ENCODE measurements at regions of chr1 and their contacts with region 1.

Region 1: GRCh38 chr1:33111970-33112369 is 31.0 kb downstream of the AZIN2 start:
- DNase-seq: peak in 3 of 14 experiments; percentile 28 to 54 (median 54)
- ATAC-seq: peak; percentile 58
- H3K4me3 ChIP-seq: no peak overlapping the region
- H3K4me3 Mint-ChIP-seq: no peak overlapping the region
- H3K27ac ChIP-seq: no peak overlapping the region
- H3K27ac Mint-ChIP-seq: no peak overlapping the region
- H3K4me1 ChIP-seq: no peaks in the 10 kb centered on the region
- H3K4me1 Mint-ChIP-seq: no peaks in the 10 kb centered on the region
- H3K27me3 ChIP-seq: no peaks in the 10 kb centered on the region
- H3K27me3 Mint-ChIP-seq: no peaks in the 10 kb centered on the region
- CTCF ChIP-seq: peak; percentile 28

Region 2: DNA sequence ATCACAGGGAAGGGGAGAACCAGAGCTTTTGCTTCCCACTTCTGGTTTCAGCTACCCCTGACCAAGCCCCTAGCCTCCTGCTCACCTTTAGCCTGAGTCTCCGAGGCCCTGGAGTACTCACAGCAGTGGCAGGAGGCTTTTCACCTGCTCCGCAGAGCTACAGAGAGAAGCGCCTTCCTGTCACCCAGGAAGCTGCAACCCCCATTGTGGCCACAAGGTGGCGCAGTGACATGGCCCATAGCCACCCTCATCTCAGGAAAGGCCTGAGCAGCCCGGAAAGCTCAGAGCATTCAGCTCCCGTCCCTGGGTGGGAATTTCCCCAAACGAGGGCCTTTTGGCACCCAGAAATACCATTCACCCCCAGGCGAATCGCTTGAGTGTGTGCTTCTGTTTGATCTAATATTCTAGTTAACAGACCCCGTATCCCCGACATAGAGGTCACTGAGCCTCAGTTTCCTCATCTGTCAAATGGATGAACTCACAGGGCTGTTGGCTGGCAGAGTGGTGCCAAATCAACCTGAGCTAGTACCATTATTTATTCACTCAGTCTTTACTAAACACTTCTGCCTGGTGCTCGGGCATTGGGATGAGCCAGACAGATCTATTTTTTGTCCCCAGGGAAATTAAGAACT is 183.6 kb after region 1 on chr1:
- CTCF ChIA-PET with region 1: no interaction called
- POLR2A ChIA-PET with region 1: no interaction called
- intact Hi-C with region 1: loop called in 1 of 2 experiments (anchors 5 kb)
- DNase-seq: peak; percentile 74 to 91 (median 86)
- ATAC-seq: peak; percentile 93
- H3K4me3 ChIP-seq: no peak overlapping the region
- H3K4me3 Mint-ChIP-seq: no peak overlapping the region
- H3K27ac ChIP-seq: no peak overlapping the region
- H3K27ac Mint-ChIP-seq: peak overlapping the region; percentile 58
- H3K4me1 ChIP-seq: peaks cover 15% of the 10 kb centered on the region
- H3K4me1 Mint-ChIP-seq: peaks cover 23% of the 10 kb centered on the region
- H3K27me3 ChIP-seq: no peaks in the 10 kb centered on the region
- H3K27me3 Mint-ChIP-seq: no peaks in the 10 kb centered on the region
- CTCF ChIP-seq: peak; percentile 93